Activated CD4-positive, alpha-beta memory T cell treated with anti-CD3 and anti-CD28 coated beads for 36 hours (primary cell): ENCODE measurements at regions of chr15 and their contacts with region 1.

Region 1: DNA sequence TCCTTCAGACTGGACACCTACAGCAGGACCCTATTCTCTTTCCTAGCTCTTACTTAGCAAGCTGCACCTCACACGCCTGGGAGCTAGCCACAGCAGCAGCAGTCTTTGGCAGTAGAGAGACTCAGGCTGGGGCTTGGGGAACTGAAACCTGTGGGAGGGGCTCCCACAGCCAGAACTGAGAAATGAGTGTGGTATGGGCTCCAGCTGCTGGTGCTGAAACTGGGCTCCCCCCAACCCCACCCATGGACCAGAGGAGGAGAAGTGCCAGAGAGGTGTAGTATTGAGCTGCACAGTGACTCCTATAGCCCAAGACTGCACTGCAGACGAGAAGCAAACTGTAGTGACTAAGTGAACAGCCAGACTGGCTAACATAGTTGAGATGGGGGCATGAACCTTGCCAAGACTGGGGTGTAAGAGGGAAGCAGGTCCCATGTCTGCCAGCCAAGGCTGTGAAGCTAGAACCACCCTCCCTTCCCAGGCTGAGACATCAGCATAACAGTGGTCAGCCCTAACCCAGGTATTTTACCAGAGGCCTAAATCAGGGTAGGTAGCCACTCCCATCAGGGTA is 62.5 kb downstream of the MYO5A start:
- DNase-seq: peak; percentile 84
- H3K4me3 Mint-ChIP-seq: no peak overlapping the region
- H3K27ac Mint-ChIP-seq: peak overlapping the region; percentile 73
- H3K4me1 Mint-ChIP-seq: peaks cover 46% of the 10 kb centered on the region
- H3K27me3 Mint-ChIP-seq: no peaks in the 10 kb centered on the region

Region 2: DNA sequence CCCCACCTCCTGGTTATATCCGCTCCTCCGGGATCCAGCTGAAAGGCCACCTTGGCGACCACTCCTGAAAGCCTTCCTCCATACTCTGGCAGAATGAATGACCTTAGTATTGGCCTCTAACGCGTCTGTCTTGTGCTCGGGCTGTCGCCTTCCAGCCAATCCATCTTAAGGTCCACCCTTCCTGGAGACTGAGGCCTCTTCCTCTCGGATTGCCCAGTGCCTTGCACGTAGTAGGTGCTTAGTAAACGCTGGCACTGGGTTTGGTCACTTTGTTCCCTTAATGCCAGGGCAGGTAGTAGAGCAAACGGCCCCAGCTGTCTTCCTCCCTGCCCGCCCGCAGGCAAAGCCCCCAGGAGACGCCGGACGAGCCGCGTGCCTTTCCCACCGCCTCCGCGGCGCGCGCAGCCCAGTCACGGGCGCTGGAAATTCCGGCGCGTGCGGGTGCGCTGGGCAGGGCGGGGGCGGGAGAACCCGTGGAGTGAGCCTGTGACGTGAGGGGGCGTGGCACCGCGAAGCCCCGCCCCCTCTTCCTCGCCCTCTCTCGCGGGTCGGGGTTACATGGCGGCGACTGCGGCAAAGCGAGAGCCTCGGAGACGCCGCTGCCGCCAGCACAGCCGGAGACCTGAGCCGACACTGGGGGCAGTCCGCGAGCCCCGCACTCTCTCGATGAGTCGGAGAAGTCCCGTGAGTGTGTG is 447.4 kb before region 1 on chr15 and contains the start of gene MAPK6:
- CTCF ChIA-PET with region 1: no interaction called
- POLR2A ChIA-PET with region 1: no interaction called
- intact Hi-C with region 1: loop called (anchors 10 kb)
- DNase-seq: peak; percentile 95
- H3K4me3 Mint-ChIP-seq: peak within 1 kb of the TSS; percentile 98
- H3K27ac Mint-ChIP-seq: peak within 1 kb of the TSS; percentile 99
- H3K4me1 Mint-ChIP-seq: peaks cover 39% of the 10 kb centered on the region
- H3K27me3 Mint-ChIP-seq: no peaks in the 10 kb centered on the region
- total RNA-seq, gene MAPK6: 39.9 to 40.8 TPM

Region 3: GRCh38 chr15:52261498-52262242 is 204.5 kb before region 1 on chr15:
- CTCF ChIA-PET with region 1: interaction called, 7 read pairs
- POLR2A ChIA-PET with region 1: no interaction called
- intact Hi-C with region 1: loop called (anchors 1 kb)
- DNase-seq: peak; percentile 87
- H3K4me3 Mint-ChIP-seq: peak overlapping the region; percentile 32
- H3K27ac Mint-ChIP-seq: peak overlapping the region; percentile 80
- H3K4me1 Mint-ChIP-seq: peaks cover 36% of the 10 kb centered on the region
- H3K27me3 Mint-ChIP-seq: no peaks in the 10 kb centered on the region

Region 4: GRCh38 chr15:52379395-52380106 is 86.7 kb before region 1 on chr15:
- CTCF ChIA-PET with region 1: interaction called, 3 read pairs
- POLR2A ChIA-PET with region 1: interaction called, 4 read pairs
- intact Hi-C with region 1: loop called (anchors 1 kb)
- DNase-seq: peak; percentile 51
- H3K4me3 Mint-ChIP-seq: peak overlapping the region; percentile 49
- H3K27ac Mint-ChIP-seq: peak overlapping the region; percentile 75
- H3K4me1 Mint-ChIP-seq: peaks cover 43% of the 10 kb centered on the region
- H3K27me3 Mint-ChIP-seq: no peaks in the 10 kb centered on the region

Region 5: GRCh38 chr15:52481915-52482314 is 15.7 kb after region 1 on chr15:
- CTCF ChIA-PET with region 1: interaction called, 13 read pairs
- POLR2A ChIA-PET with region 1: interaction called, 5 read pairs
- intact Hi-C with region 1: loop called (anchors 1 kb)
- DNase-seq: peak; percentile 60
- H3K4me3 Mint-ChIP-seq: no peak overlapping the region
- H3K27ac Mint-ChIP-seq: peak overlapping the region; percentile 53
- H3K4me1 Mint-ChIP-seq: peaks cover 67% of the 10 kb centered on the region
- H3K27me3 Mint-ChIP-seq: no peaks in the 10 kb centered on the region

Region 6: DNA sequence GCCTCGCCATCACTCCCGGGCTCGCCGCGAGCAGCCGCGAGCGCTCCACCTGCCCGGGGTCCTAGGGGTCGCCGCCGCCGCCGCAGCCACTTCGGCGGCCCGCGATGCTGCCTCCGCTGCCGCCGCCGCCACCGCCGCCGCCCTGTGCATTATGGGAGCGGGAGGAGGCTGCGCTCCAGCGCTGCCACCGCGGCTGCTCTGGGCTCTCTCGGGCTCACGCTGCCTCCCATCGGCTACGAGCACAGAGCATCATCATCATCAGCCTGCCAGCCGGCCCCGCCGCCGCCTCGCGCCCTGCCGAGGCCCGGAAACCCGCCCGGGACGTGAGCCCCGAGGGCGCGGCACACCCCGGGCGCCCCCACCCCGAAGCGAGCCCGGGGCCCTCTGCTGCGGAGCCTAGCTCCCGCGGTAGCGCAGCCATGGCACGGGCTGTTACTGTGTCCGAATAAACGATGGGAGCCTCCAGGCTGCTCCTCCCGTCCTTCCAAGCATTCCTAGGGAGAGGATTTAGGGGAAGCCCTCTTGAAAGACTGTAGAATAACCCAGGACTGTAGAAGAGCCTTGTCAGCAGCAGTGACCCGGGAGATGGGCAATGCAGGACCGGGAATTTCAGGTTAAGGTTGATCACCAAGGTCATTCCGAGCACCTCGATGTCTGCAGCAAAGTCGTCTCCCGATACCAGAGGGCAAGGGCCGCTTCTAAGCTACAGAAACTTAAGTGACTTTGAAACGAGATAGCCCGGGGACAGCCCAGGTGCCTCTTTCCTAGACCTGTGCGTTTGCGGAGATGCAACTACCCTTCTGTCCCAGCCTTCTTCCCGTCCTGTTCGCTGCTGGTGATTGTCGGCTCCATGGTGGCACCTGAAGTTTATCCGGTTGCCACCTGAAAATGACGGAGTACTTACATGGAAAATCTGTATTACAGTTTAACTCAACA is 63.0 kb after region 1 on chr15:
- CTCF ChIA-PET with region 1: interaction called, 6 read pairs
- POLR2A ChIA-PET with region 1: interaction called, 4 read pairs
- intact Hi-C with region 1: loop called (anchors 1 kb)
- DNase-seq: peak; percentile 86
- H3K4me3 Mint-ChIP-seq: peak overlapping the region; percentile 78
- H3K27ac Mint-ChIP-seq: peak overlapping the region; percentile 75
- H3K4me1 Mint-ChIP-seq: peaks cover 33% of the 10 kb centered on the region
- H3K27me3 Mint-ChIP-seq: peaks cover 2% of the 10 kb centered on the region